Spleen (tissue), 13 donors: ENCODE measurements at regions of chr1 and their contacts with region 1.

Region 1: GRCh38 chr1:43934101-43934985 is 742 bp downstream of the ARTN start:
- DNase-seq: peak; percentile 87
- H3K4me3 ChIP-seq: peak overlapping the region in 2 of 8 donors; percentile 15 to 52
- H3K27ac ChIP-seq: no peak overlapping the region
- H3K4me1 ChIP-seq: peaks cover 7 to 41% (median 34%) of the 10 kb centered on the region in 6 donors
- H3K27me3 ChIP-seq: peaks cover 0 to 47% (median 31%) of the 10 kb centered on the region in 7 donors
- CTCF ChIP-seq: peak; percentile 65 to 90 (median 76)
- POLR2A ChIP-seq: no peak

Region 2: DNA sequence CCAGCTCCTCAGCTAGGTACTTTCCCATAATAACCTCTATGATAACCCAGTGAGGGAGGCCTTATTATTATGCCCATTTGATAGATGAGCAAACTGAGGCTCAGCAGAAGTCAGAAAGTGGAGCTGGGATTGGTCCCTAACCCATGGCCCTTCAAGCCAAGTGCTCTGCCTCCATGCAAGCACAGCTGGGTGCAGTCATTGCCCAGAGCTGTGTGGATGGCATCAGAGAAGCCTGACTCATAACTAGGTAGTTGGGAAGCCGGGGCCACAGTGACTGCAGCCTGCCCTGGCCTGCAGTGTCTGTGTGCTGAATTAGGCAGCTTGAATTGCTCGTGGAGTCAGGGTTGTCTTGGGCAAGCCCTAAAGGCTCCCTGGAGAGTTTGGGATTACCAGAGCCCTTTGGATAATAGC is 885.7 kb before region 1 on chr1:
- intact Hi-C with region 1: no loop called
- DNase-seq: no peak
- H3K4me3 ChIP-seq: no peak overlapping the region
- H3K27ac ChIP-seq: no peak overlapping the region
- H3K4me1 ChIP-seq: no peaks in the 10 kb centered on the region
- H3K27me3 ChIP-seq: no peaks in the 10 kb centered on the region
- CTCF ChIP-seq: no peak
- POLR2A ChIP-seq: no peak

Region 3: DNA sequence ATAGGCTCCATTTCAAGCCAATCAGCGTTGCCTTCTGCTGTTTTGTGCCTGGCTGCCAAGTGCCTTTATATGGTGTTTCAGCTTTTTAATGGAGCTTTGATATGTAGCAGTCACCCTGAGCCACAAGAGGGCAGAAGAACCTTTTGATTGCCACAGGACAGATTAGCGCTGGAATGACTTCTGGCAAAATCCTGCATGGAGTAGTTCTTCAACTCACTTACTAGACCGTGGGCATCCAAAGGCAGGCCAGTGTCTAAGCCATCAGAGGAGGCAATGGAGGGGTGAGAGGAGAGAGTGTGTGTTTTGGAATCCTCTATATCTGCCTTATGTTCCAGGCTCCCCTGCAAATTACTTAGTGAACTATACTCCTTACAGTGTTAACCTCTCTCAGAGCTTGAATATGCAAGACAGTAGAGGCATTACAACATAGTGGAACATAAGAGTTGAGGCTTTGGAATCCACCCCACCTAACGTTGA is 170.8 kb before region 1 on chr1:
- intact Hi-C with region 1: loop called (anchors 5 kb)
- DNase-seq: no peak
- H3K4me3 ChIP-seq: no peak overlapping the region
- H3K27ac ChIP-seq: no peak overlapping the region
- H3K4me1 ChIP-seq: peaks cover 11 to 45% (median 22%) of the 10 kb centered on the region in 6 donors
- H3K27me3 ChIP-seq: no peaks in the 10 kb centered on the region
- CTCF ChIP-seq: peak; percentile 44 to 89 (median 78)
- POLR2A ChIP-seq: no peak